CD4-positive, alpha-beta T cell (primary cell): ENCODE measurements at regions of chr2 and their contacts with region 1.

Region 1: GRCh38 chr2:106076941-106077340 is 117.2 kb downstream of the UXS1 start:
- DNase-seq: peak in 2 of 14 experiments; percentile 22 to 54
- ATAC-seq: no peak
- H3K4me3 ChIP-seq: no peak overlapping the region
- H3K4me3 Mint-ChIP-seq: no peak overlapping the region
- H3K27ac ChIP-seq: no peak overlapping the region
- H3K27ac Mint-ChIP-seq: no peak overlapping the region
- H3K4me1 ChIP-seq: peaks cover 7% of the 10 kb centered on the region
- H3K4me1 Mint-ChIP-seq: peaks cover 54% of the 10 kb centered on the region
- H3K27me3 ChIP-seq: no peaks in the 10 kb centered on the region
- H3K27me3 Mint-ChIP-seq: no peaks in the 10 kb centered on the region
- CTCF ChIP-seq: no peak

Region 2: DNA sequence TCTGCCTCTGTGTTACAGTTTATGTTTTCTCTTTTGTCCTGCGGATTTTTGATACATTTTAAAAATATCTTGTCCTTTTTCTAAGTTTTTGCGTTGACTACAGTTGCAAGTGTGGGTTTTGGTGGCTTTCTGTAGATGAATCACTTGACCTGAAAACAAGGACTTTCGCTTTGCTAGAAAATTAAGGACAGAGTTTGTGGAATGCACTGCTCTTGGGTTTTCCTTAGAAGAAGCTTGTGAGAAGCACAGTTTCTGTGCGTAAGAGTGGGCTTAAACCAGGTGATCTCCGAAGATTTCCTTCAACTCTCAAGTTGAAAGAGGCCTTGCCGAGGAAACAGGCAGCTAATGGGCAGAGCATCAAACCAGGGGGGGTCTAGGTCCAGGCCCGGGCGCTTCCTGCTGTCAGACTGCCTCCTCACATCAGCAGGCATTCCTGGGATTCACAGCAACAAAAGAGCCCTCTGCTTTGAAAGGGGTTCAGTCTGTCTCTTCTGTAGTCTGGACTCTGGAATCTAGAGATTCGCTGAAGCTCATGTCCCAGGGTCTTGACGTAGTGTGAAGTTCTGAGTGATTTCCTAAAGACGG is 314.9 kb before region 1 on chr2:
- CTCF ChIA-PET with region 1: no interaction called
- POLR2A ChIA-PET with region 1: no interaction called
- intact Hi-C with region 1: loop called in 1 of 2 experiments (anchors 5 kb)
- DNase-seq: no peak
- ATAC-seq: no peak
- H3K4me3 ChIP-seq: peak overlapping the region; percentile 17
- H3K4me3 Mint-ChIP-seq: peak overlapping the region; percentile 58
- H3K27ac ChIP-seq: peak overlapping the region; percentile 22 to 44
- H3K27ac Mint-ChIP-seq: peak overlapping the region; percentile 98
- H3K4me1 ChIP-seq: peaks cover 87% of the 10 kb centered on the region
- H3K4me1 Mint-ChIP-seq: peaks cover 98% of the 10 kb centered on the region
- H3K27me3 ChIP-seq: no peaks in the 10 kb centered on the region
- H3K27me3 Mint-ChIP-seq: no peaks in the 10 kb centered on the region
- CTCF ChIP-seq: no peak

Region 3: GRCh38 chr2:105929516-105929915 is 147.4 kb before region 1 on chr2:
- CTCF ChIA-PET with region 1: no interaction called
- POLR2A ChIA-PET with region 1: no interaction called
- intact Hi-C with region 1: loop called in 1 of 2 experiments (anchors 5 kb)
- DNase-seq: peak; percentile 8 to 89 (median 52)
- ATAC-seq: peak; percentile 82
- H3K4me3 ChIP-seq: no peak overlapping the region
- H3K4me3 Mint-ChIP-seq: peak overlapping the region; percentile 47
- H3K27ac ChIP-seq: peak overlapping the region; percentile 19 to 42
- H3K27ac Mint-ChIP-seq: peak overlapping the region; percentile 81
- H3K4me1 ChIP-seq: peaks cover 95% of the 10 kb centered on the region
- H3K4me1 Mint-ChIP-seq: peaks cover 62% of the 10 kb centered on the region
- H3K27me3 ChIP-seq: no peaks in the 10 kb centered on the region
- H3K27me3 Mint-ChIP-seq: no peaks in the 10 kb centered on the region
- CTCF ChIP-seq: no peak

Region 4: GRCh38 chr2:105977212-105977611 is 99.7 kb before region 1 on chr2:
- CTCF ChIA-PET with region 1: no interaction called
- POLR2A ChIA-PET with region 1: no interaction called
- intact Hi-C with region 1: loop called in 1 of 2 experiments (anchors 5 kb)
- DNase-seq: peak in 1 of 14 experiments; percentile 28
- ATAC-seq: no peak
- H3K4me3 ChIP-seq: no peak overlapping the region
- H3K4me3 Mint-ChIP-seq: no peak overlapping the region
- H3K27ac ChIP-seq: no peak overlapping the region
- H3K27ac Mint-ChIP-seq: peak overlapping the region; percentile 68
- H3K4me1 ChIP-seq: peaks cover 32% of the 10 kb centered on the region
- H3K4me1 Mint-ChIP-seq: peaks cover 39% of the 10 kb centered on the region
- H3K27me3 ChIP-seq: no peaks in the 10 kb centered on the region
- H3K27me3 Mint-ChIP-seq: no peaks in the 10 kb centered on the region
- CTCF ChIP-seq: no peak

Region 5: GRCh38 chr2:106065268-106065982 is 11.5 kb before region 1 on chr2:
- CTCF ChIA-PET with region 1: no interaction called
- POLR2A ChIA-PET with region 1: interaction called, 6 read pairs
- intact Hi-C with region 1: loop called in 1 of 2 experiments (anchors 1 kb)
- DNase-seq: peak in 8 of 14 experiments; percentile 18 to 44 (median 30)
- ATAC-seq: peak; percentile 68
- H3K4me3 ChIP-seq: peak overlapping the region; percentile 55
- H3K4me3 Mint-ChIP-seq: peak overlapping the region; percentile 87
- H3K27ac ChIP-seq: no peak overlapping the region
- H3K27ac Mint-ChIP-seq: peak overlapping the region; percentile 62
- H3K4me1 ChIP-seq: peaks cover 18% of the 10 kb centered on the region
- H3K4me1 Mint-ChIP-seq: peaks cover 49% of the 10 kb centered on the region
- H3K27me3 ChIP-seq: peaks cover 7 to 8% of the 10 kb centered on the region in 2 experiments
- H3K27me3 Mint-ChIP-seq: peaks cover 14% of the 10 kb centered on the region
- CTCF ChIP-seq: no peak

Region 6: DNA sequence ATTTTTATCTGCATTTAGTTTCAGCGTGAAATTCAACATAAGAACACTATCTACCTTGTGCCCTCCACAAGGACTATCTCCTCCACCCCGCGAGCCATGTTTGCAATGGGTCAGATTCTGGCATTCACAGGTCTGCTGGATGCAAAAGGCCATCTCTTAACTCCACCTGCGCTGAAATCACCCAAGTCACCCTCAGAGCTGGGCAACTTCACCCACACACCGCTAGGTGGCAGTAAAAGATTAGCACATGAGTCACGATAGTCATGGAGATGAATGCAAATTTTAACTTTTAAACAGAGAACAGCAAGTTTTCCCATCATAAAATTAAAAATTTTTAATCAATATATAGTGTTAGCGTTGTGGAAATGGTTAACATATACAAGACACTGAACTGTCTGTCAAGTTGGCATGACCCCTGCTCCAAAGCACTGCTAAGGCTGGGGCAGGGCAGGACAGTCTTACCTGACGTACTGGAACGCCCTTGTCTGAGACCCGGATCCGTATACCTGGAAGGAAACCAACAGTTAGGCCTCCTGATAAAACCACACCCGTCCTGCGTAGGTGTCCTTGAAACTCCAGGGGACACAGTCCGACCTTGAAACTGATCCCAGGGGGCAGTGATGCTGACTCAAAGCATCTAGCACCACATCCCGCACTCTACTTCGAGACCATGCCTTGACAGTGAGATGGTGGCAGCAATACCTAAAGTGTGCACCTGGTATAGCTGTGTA is 27.6 kb after region 1 on chr2:
- CTCF ChIA-PET with region 1: no interaction called
- POLR2A ChIA-PET with region 1: no interaction called
- intact Hi-C with region 1: no loop called
- DNase-seq: peak; percentile 40 to 85 (median 58)
- ATAC-seq: peak; percentile 80
- H3K4me3 ChIP-seq: no peak overlapping the region
- H3K4me3 Mint-ChIP-seq: no peak overlapping the region
- H3K27ac ChIP-seq: no peak overlapping the region
- H3K27ac Mint-ChIP-seq: peak overlapping the region; percentile 55
- H3K4me1 ChIP-seq: no peaks in the 10 kb centered on the region
- H3K4me1 Mint-ChIP-seq: peaks cover 9% of the 10 kb centered on the region
- H3K27me3 ChIP-seq: no peaks in the 10 kb centered on the region
- H3K27me3 Mint-ChIP-seq: no peaks in the 10 kb centered on the region
- CTCF ChIP-seq: peak; percentile 97